Activated T-helper 2 cell treated with anti-CD3 and anti-CD28 coated beads, Interferon-gamma antibody, Interleukin-2, Interleukin-4, amounts not matched to agents 10 μg/mL and 5 μg/mL and 100 μg/mL, durations not matched to agents 14 hours and 24 hours and 36 hours (primary cell): ENCODE measurements at regions of chr12 and their contacts with region 1.

Region 1: DNA sequence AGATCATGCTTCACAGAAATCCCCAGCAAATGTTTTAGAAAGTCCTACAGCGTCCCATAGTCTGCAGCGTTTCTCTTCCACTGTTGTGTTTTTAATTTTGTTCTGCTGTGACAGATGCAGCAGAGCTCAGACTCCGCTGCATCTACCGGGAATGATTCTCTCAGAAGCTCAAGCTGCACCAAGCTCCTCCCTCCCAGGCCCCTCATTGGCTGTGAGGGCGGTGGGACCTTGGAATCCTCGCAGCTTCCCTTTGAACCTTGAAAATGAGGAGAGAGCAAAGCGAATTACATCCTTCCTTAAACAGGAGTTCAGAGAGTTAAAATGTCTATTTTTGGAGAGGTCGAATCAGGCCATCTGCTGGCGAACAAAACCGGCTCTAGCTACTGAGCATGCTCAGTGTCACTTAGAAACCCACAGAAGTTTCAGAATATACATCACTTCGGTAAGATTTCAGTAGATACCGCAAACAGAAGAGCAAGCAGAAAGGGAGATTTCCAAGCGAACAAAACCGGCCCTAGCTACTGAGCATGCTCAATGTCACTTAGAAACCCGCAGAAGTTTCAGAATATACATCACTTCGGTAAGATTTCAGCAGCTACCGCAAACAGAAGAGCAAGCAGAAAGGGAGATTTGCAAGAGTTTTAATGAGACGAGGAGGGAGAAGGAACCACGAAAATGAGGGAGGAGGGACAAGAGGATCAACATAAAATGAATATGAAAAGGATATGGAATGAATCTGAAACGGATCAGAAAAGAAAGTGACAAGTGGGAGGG is at the start of gene ABCD2:
- DNase-seq: peak; percentile 79
- H3K4me3 Mint-ChIP-seq: no peak within 1 kb of the TSS
- H3K27ac Mint-ChIP-seq: no peak within 1 kb of the TSS
- H3K4me1 Mint-ChIP-seq: peaks cover 30% of the 10 kb centered on the region
- H3K27me3 Mint-ChIP-seq: no peaks in the 10 kb centered on the region
- total RNA-seq, gene ABCD2: 5.8 TPM in 2 replicates

Region 2: DNA sequence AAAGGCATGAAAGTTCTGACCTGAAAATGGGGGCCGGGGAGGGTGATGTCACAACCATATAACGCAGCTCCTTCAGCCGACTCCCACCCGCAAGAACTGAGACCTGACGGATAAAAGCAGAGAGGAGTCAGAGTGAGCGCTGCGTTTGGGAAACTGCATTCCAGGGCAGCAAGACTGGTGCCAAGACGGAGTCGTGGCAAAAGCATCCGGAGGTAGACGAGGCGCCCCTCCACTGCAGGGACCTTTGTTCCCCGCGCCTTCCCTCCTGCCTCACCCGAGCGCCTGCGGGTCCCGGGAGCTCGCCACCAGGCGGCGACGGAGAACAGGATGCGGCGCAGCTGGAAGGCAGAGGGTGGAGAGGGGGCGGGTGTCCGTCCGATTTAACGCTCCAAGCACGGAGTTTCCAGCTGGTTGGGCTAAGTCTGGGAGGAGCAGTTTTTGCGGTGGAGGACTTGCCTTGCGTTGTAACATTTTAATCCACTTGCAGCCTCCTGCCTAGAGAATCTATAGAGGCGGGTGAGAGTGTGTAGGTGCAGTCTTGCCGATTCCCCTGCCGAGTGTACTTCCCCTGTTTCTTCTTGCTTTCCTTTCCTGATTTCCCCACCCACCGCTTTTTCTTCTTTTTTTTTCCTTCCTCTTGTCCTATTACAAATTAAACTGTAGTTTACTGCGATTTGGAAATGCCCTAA is 713.2 kb before region 1 on chr12:
- intact Hi-C with region 1: loop called (anchors 2 kb)
- DNase-seq: peak; percentile 63
- H3K4me3 Mint-ChIP-seq: peak overlapping the region; percentile 89
- H3K27ac Mint-ChIP-seq: peak overlapping the region; percentile 87
- H3K4me1 Mint-ChIP-seq: peaks cover 30% of the 10 kb centered on the region
- H3K27me3 Mint-ChIP-seq: peaks cover 19% of the 10 kb centered on the region

Region 3: GRCh38 chr12:39372929-39373328 is 246.9 kb before region 1 on chr12:
- intact Hi-C with region 1: loop called (anchors 2 kb)
- DNase-seq: peak; percentile 10
- H3K4me3 Mint-ChIP-seq: no peak overlapping the region
- H3K27ac Mint-ChIP-seq: peak overlapping the region; percentile 79
- H3K4me1 Mint-ChIP-seq: peaks cover 35% of the 10 kb centered on the region
- H3K27me3 Mint-ChIP-seq: no peaks in the 10 kb centered on the region

Region 4: GRCh38 chr12:39467432-39467870 is 152.4 kb before region 1 on chr12:
- intact Hi-C with region 1: loop called (anchors 2 kb)
- DNase-seq: no peak
- H3K4me3 Mint-ChIP-seq: peak overlapping the region; percentile 58
- H3K27ac Mint-ChIP-seq: peak overlapping the region; percentile 63
- H3K4me1 Mint-ChIP-seq: peaks cover 18% of the 10 kb centered on the region
- H3K27me3 Mint-ChIP-seq: peaks cover 5% of the 10 kb centered on the region

Region 5: DNA sequence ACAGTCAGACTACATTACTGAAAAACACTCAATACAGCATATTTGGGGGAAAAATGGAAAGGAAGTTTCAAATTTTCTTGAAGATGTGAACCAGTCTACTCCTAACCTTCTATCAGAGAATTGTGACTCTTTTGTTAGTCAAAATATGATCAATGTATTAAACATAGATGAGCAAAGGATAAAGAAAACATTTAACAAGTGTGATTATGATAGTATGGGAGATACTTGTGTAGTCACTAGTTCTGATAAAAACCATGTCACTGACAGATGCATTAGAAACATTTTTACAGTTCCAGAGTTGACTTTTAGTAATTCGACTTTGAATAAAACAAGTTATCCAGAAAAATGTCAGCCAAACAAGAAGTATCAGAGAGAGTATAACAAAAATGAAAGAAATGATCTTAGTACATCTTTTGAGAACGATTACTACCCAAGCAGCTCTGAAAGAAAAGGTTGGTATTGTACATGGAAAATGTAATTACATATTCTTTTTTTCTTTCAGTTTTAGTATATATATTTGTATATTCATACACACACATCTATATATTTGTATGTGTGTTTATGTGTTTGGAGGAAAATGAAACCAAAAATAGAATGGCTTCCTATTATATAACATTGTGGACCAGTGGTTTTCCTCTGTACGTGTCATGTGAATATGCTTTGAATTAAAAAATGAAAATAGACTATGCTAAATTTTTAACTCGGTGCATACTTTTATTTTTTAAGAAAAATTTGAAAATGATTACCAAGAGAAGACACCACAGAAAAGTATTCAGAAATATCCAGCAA is 63.0 kb after region 1 on chr12:
- intact Hi-C with region 1: loop called (anchors 1 kb)
- DNase-seq: no peak
- H3K4me3 Mint-ChIP-seq: peak overlapping the region; percentile 69
- H3K27ac Mint-ChIP-seq: peak overlapping the region; percentile 70
- H3K4me1 Mint-ChIP-seq: peaks cover 39% of the 10 kb centered on the region
- H3K27me3 Mint-ChIP-seq: no peaks in the 10 kb centered on the region

Region 6: GRCh38 chr12:39946361-39946948 is 326.6 kb after region 1 on chr12:
- intact Hi-C with region 1: no loop called
- DNase-seq: no peak
- H3K4me3 Mint-ChIP-seq: no peak overlapping the region
- H3K27ac Mint-ChIP-seq: no peak overlapping the region
- H3K4me1 Mint-ChIP-seq: no peaks in the 10 kb centered on the region
- H3K27me3 Mint-ChIP-seq: no peaks in the 10 kb centered on the region

Region 7: GRCh38 chr12:40107098-40107802 is 487.4 kb after region 1 on chr12:
- intact Hi-C with region 1: loop called (anchors 2 kb)
- DNase-seq: peak; percentile 73
- H3K4me3 Mint-ChIP-seq: peak overlapping the region; percentile 47
- H3K27ac Mint-ChIP-seq: no peak overlapping the region
- H3K4me1 Mint-ChIP-seq: peaks cover 25% of the 10 kb centered on the region
- H3K27me3 Mint-ChIP-seq: peaks cover 31% of the 10 kb centered on the region